Sciatic nerve (tissue), 2 donors: ENCODE measurements at regions of chr14 and their contacts with region 1.

Region 1: GRCh38 chr14:22420598-22421186 is 168.3 kb downstream of the DAD1 start:
- DNase-seq: no peak
- ATAC-seq: peak; percentile 55

Region 2: GRCh38 chr14:22432348-22432976 is 11.8 kb after region 1 on chr14:
- intact Hi-C with region 1: loop called (anchors 1 kb)
- DNase-seq: no peak
- ATAC-seq: peak; percentile 88

Region 3: GRCh38 chr14:22570132-22570949 is 149.6 kb after region 1 on chr14:
- intact Hi-C with region 1: no loop called
- DNase-seq: peak; percentile 84
- ATAC-seq: peak; percentile 93